HCT116 (cell line): ENCODE measurements at regions of chr7 and their contacts with region 1.

Region 1: DNA sequence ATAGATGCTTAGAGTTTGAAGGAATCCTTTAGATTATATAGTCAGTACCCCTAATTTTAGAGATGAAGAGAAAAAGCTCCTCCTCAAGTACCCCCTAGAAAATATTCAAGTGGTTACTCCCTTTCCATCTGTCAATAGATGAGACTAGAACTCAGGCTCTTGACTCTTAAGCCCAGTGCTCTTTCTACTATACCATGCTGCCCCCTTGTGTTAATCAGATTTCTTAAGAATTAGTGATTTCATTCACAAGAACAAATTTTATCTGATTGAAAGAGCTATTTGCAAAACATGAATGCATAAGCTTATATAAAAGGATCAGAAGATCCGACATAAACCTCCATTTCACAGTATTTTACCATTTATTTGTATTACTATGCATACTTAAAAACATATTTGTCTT is 179.3 kb downstream of the TFEC start:
- DNase-seq: peak; percentile 54
- ATAC-seq: peak; percentile 65
- H3K4me3 ChIP-seq: no peak overlapping the region
- H3K27ac ChIP-seq: no peak overlapping the region
- H3K4me1 ChIP-seq: no peaks in the 10 kb centered on the region
- H3K27me3 ChIP-seq: no peaks in the 10 kb centered on the region
- CTCF ChIP-seq: peak in 2 of 3 experiments; percentile 58 to 71; a peak in 4 of 6 replicates
- POLR2A ChIP-seq: no peak
- RAD21 ChIP-seq: peak; percentile 86

Region 2: GRCh38 chr7:114026486-114027089 is 1824.7 kb before region 1 on chr7:
- CTCF ChIA-PET with region 1: interaction called, 3 read pairs
- POLR2A ChIA-PET with region 1: no interaction called
- RAD21 ChIA-PET with region 1: no interaction called
- intact Hi-C with region 1: loop called (anchors 5 kb)
- DNase-seq: peak; percentile 45
- ATAC-seq: no peak
- H3K4me3 ChIP-seq: no peak overlapping the region
- H3K27ac ChIP-seq: no peak overlapping the region
- H3K4me1 ChIP-seq: no peaks in the 10 kb centered on the region
- H3K27me3 ChIP-seq: no peaks in the 10 kb centered on the region
- CTCF ChIP-seq: peak; percentile 38 to 61 (median 56); a peak in 5 of 6 replicates
- POLR2A ChIP-seq: no peak
- RAD21 ChIP-seq: peak; percentile 76

Region 3: GRCh38 chr7:114426382-114427223 is 1424.7 kb before region 1 on chr7:
- CTCF ChIA-PET with region 1: interaction called, 11 read pairs
- POLR2A ChIA-PET with region 1: no interaction called
- RAD21 ChIA-PET with region 1: no interaction called
- intact Hi-C with region 1: no loop called
- DNase-seq: peak; percentile 7
- ATAC-seq: 0 out of 2 replicates have a peak, but pooled peaks have one; percentile 63
- H3K4me3 ChIP-seq: no peak overlapping the region
- H3K27ac ChIP-seq: no peak overlapping the region
- H3K4me1 ChIP-seq: no peaks in the 10 kb centered on the region
- H3K27me3 ChIP-seq: no peaks in the 10 kb centered on the region
- CTCF ChIP-seq: peak; percentile 27 to 57 (median 42); a peak in 5 of 6 replicates
- POLR2A ChIP-seq: no peak
- RAD21 ChIP-seq: peak; percentile 49

Region 4: DNA sequence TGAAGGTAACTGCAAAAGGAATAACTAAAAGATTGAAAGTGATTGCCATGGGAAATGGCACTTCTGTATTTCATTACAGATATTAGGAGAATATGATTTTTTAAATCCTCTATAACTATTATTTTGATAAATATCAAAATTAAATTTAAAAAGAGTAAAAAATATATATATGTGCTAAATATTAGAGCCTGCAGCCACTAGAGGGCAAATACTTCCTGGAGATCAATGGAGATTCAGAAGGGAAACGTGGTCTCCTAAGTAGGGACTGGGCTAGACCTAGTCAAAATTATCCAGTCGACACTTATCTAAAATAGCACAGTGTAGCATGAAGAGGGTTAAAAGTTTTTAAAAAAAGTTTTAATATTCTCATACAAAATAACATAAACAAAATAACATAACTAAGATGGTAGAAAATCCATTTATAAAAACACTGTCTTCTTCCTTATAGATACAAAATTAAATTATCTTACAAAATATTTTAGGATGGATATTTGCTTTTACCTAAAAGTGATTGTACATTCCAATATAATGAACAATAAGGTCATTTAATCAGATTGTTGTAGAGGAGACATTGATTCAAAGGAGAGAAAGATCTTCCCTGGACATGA is 495.0 kb before region 1 on chr7:
- CTCF ChIA-PET with region 1: interaction called, 3 read pairs
- POLR2A ChIA-PET with region 1: no interaction called
- RAD21 ChIA-PET with region 1: no interaction called
- intact Hi-C with region 1: loop called (anchors 1 kb)
- DNase-seq: peak; percentile 21
- ATAC-seq: peak; percentile 63
- H3K4me3 ChIP-seq: no peak overlapping the region
- H3K27ac ChIP-seq: no peak overlapping the region
- H3K4me1 ChIP-seq: no peaks in the 10 kb centered on the region
- H3K27me3 ChIP-seq: no peaks in the 10 kb centered on the region
- CTCF ChIP-seq: peak; percentile 28 to 56 (median 45); a peak in 5 of 6 replicates
- POLR2A ChIP-seq: no peak
- RAD21 ChIP-seq: peak; percentile 51

Region 5: GRCh38 chr7:115707258-115708012 is 143.9 kb before region 1 on chr7:
- CTCF ChIA-PET with region 1: interaction called, 19 read pairs
- POLR2A ChIA-PET with region 1: no interaction called
- RAD21 ChIA-PET with region 1: no interaction called
- intact Hi-C with region 1: no loop called
- DNase-seq: peak; percentile 66
- ATAC-seq: peak; percentile 94
- H3K4me3 ChIP-seq: no peak overlapping the region
- H3K27ac ChIP-seq: no peak overlapping the region
- H3K4me1 ChIP-seq: no peaks in the 10 kb centered on the region
- H3K27me3 ChIP-seq: no peaks in the 10 kb centered on the region
- CTCF ChIP-seq: peak; percentile 34 to 68 (median 66); a peak in 4 of 6 replicates
- POLR2A ChIP-seq: no peak
- RAD21 ChIP-seq: peak; percentile 79

Region 6: GRCh38 chr7:115838829-115839228 is 12.5 kb before region 1 on chr7:
- CTCF ChIA-PET with region 1: interaction called, 15 read pairs
- POLR2A ChIA-PET with region 1: no interaction called
- RAD21 ChIA-PET with region 1: interaction called, 4 read pairs
- intact Hi-C with region 1: no loop called
- DNase-seq: no peak
- ATAC-seq: no peak
- H3K4me3 ChIP-seq: no peak overlapping the region
- H3K27ac ChIP-seq: no peak overlapping the region
- H3K4me1 ChIP-seq: no peaks in the 10 kb centered on the region
- H3K27me3 ChIP-seq: no peaks in the 10 kb centered on the region
- CTCF ChIP-seq: no peak
- POLR2A ChIP-seq: no peak
- RAD21 ChIP-seq: no peak

Region 7: GRCh38 chr7:116122972-116123595 is 271.8 kb after region 1 on chr7:
- CTCF ChIA-PET with region 1: no interaction called
- POLR2A ChIA-PET with region 1: no interaction called
- RAD21 ChIA-PET with region 1: no interaction called
- intact Hi-C with region 1: loop called (anchors 5 kb)
- DNase-seq: peak; percentile 32
- ATAC-seq: no peak; the same call in 1 of the 2 replicates
- H3K4me3 ChIP-seq: no peak overlapping the region
- H3K27ac ChIP-seq: no peak overlapping the region
- H3K4me1 ChIP-seq: no peaks in the 10 kb centered on the region
- H3K27me3 ChIP-seq: no peaks in the 10 kb centered on the region
- CTCF ChIP-seq: peak; percentile 46 to 79 (median 73); a peak in 5 of 6 replicates
- POLR2A ChIP-seq: no peak
- RAD21 ChIP-seq: peak; percentile 79

Region 8: GRCh38 chr7:116815041-116815440 is 963.8 kb after region 1 on chr7:
- CTCF ChIA-PET with region 1: no interaction called
- POLR2A ChIA-PET with region 1: no interaction called
- RAD21 ChIA-PET with region 1: no interaction called
- intact Hi-C with region 1: no loop called
- DNase-seq: no peak
- ATAC-seq: no peak
- H3K4me3 ChIP-seq: no peak overlapping the region
- H3K27ac ChIP-seq: no peak overlapping the region
- H3K4me1 ChIP-seq: peaks cover 10 to 13% of the 10 kb centered on the region in 2 experiments
- H3K27me3 ChIP-seq: no peaks in the 10 kb centered on the region
- CTCF ChIP-seq: no peak
- POLR2A ChIP-seq: no peak
- RAD21 ChIP-seq: no peak